ENCODE measurements at regions of chrX and their contacts with region 1.

Region 1: DNA sequence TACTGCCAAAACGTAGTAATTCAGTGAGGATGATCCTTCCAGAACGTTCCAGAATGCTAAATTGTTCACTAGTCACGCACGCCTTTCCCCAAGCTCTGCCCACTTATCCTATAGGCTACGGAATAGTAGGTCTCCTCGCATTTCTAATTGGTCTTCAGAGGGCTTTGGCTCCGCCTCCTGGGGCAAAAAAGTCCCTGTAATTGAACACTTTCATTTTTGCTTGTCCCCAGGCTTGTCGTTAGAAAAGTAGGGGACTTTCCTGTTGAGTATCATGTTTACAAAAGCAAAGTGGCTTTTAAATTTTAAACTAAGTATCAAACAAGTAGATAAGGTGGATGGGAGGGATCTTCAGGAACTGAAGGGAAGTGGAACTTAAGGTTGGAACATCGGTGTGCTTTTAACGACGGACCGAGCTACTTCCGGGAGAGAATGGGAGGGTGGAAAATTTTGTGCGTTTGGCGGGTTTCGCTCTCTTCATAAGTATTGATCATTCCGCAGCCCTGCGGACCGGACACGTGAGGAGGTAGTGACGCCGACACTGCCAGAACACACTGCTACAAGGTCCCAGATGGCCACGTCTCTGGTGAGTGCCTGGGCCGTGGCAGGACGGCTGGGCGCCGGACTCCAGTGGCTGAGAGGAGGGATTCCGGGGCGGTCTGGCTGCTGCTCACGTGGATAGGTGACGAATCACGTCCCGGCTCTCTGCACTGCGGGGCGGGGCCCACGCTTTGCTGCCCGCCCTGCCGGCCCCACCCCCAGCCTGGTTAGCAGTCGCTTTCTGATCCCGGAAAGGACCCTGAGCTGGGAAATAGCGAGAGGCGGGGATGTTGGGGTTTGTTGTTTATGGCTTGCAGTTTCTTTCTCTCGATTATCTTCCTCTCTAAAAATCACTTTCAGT is at the start of gene NXT2:
- DNase-seq: peak; percentile 92
- H3K4me3 Mint-ChIP-seq: peak within 1 kb of the TSS; percentile 80
- H3K27ac Mint-ChIP-seq: peak within 1 kb of the TSS; percentile 98
- H3K4me1 Mint-ChIP-seq: peaks cover 17% of the 10 kb centered on the region
- H3K27me3 Mint-ChIP-seq: no peaks in the 10 kb centered on the region
- CTCF ChIP-seq: no peak
- total RNA-seq, gene NXT2: 13.1 and 14.6 TPM in 2 replicates

Region 2: DNA sequence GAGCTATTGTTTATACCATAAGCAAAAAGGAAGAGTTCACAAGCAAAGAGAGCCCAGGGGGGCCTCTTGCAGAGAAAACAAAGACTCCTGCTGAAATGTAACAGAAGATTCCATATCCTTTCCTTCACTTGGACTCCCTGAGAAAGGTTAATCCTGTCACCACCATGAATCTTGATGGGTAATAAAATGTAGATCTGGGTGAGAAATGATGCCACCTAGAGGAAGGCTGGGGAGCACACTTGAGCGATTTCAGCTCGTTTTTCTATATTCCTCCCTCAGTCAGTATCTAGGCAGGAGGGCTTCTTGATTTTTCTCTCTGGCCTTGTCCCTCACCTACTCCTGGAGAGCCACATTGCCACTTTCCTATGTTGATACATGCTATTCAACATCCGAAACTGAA is 98.5 kb after region 1 on chrX:
- CTCF ChIA-PET with region 1: no interaction called
- intact Hi-C with region 1: loop called (anchors 5 kb)
- DNase-seq: peak; percentile 5
- H3K4me3 Mint-ChIP-seq: no peak overlapping the region
- H3K27ac Mint-ChIP-seq: no peak overlapping the region
- H3K4me1 Mint-ChIP-seq: no peaks in the 10 kb centered on the region
- H3K27me3 Mint-ChIP-seq: no peaks in the 10 kb centered on the region
- CTCF ChIP-seq: peak; percentile 52

Measured in Calu3 (cell line).